ENCODE measurements at regions of chr14 and their contacts with region 1.

Region 1: GRCh38 chr14:74604911-74605310 is 7.1 kb downstream of the LTBP2 start:
- DNase-seq: no peak
- H3K4me3 ChIP-seq: peak overlapping the region in 1 of 3 donors; percentile 15
- H3K27ac ChIP-seq: peak overlapping the region in 1 of 2 donors; percentile 74
- H3K4me1 ChIP-seq: no peaks in the 10 kb centered on the region
- H3K27me3 ChIP-seq: no peaks in the 10 kb centered on the region
- CTCF ChIP-seq: no peak
- POLR2A ChIP-seq: no peak

Region 2: DNA sequence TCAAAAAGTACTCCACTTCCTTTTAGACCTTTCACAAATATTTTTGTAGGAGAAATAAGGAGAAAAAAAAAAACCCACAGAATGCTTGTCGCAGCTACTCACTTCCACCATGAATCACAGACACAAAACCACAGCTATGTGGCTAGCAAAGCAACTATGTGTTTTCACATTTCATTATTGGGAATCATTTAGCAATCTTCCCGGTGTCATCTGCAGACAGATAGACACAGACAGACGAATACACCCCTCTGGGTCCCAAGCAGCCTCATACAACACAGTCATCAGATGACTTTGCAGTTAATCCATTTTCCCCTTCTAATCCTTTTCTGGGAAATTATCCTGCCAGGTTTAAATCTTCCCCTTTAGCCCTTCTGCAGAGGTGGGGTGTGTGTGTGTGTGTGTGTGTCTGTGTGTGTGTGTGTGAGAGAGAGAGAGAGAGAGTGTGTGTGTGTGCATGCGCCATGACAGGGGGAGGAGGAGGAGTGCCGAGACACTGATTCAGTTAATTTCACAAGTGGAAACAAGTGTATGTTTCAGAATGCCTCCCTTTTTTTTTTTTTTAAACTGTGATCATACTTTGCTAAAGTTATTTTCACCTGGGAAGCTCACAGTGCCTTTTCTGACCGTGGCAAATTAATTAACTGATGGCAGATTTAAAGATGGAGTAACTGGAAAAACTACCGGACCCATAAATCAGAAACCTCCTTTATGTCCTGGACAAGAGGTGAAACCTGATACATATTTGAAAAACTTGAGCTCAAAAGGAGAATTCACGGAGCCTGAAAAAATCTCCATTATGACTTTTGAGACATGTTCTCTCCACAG is 32.8 kb before region 1 on chr14:
- intact Hi-C with region 1: loop called (anchors 1 kb)
- DNase-seq: peak in 1 of 2 donors; percentile 72
- H3K4me3 ChIP-seq: peak overlapping the region in 2 of 3 donors; percentile 32 to 59
- H3K27ac ChIP-seq: peak overlapping the region; percentile 93 to 98
- H3K4me1 ChIP-seq: peaks cover 18 to 43% of the 10 kb centered on the region in 2 donors
- H3K27me3 ChIP-seq: no peaks in the 10 kb centered on the region
- CTCF ChIP-seq: no peak
- POLR2A ChIP-seq: peak; percentile 23

Region 3: DNA sequence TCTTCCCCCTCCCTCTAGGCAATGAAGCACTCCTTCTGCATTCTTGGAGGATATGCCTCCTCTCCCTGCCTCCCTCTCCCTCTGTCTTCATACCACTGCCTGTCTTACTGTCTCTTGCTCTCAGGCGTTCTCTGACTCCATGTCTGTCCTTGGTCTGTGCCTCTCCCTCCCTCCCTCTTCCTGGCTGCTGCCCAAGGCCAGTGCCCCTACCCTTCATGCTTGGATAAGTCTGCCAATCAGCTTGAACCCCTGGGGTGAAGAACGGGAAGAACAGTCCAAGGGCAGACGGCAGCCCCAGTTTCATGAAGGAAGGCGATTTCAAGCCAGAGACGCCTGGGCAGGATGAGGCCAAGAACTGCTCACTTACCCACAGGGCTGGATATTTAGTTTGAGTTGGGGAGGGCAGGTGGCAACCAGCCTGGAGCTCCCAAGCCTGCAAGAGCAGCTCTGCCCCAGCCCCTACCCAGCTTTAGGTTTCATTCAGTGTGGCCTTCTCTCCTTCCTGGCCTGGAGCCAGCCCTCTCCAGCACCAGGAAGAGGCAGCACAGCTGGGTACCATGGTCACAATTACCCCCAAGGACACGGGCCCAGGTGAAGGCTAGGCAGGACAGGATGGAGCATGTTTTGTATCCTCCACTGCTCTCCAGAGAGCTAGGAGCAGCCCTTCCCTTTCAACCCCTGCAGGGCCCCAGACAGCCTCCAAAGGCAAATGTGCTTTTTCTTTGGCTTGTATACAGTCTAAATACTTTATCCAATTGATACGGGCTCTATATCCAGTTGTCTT is 43.0 kb after region 1 on chr14:
- intact Hi-C with region 1: no loop called
- DNase-seq: peak in 1 of 2 donors; percentile 62
- H3K4me3 ChIP-seq: no peak overlapping the region
- H3K27ac ChIP-seq: peak overlapping the region; percentile 41 to 50
- H3K4me1 ChIP-seq: peaks cover 0 to 9% of the 10 kb centered on the region in 2 donors
- H3K27me3 ChIP-seq: no peaks in the 10 kb centered on the region
- CTCF ChIP-seq: no peak
- POLR2A ChIP-seq: no peak

Measured in breast epithelium (tissue), 4 donors.